ENCODE measurements at regions of chr2 and their contacts with region 1.

Region 1: DNA sequence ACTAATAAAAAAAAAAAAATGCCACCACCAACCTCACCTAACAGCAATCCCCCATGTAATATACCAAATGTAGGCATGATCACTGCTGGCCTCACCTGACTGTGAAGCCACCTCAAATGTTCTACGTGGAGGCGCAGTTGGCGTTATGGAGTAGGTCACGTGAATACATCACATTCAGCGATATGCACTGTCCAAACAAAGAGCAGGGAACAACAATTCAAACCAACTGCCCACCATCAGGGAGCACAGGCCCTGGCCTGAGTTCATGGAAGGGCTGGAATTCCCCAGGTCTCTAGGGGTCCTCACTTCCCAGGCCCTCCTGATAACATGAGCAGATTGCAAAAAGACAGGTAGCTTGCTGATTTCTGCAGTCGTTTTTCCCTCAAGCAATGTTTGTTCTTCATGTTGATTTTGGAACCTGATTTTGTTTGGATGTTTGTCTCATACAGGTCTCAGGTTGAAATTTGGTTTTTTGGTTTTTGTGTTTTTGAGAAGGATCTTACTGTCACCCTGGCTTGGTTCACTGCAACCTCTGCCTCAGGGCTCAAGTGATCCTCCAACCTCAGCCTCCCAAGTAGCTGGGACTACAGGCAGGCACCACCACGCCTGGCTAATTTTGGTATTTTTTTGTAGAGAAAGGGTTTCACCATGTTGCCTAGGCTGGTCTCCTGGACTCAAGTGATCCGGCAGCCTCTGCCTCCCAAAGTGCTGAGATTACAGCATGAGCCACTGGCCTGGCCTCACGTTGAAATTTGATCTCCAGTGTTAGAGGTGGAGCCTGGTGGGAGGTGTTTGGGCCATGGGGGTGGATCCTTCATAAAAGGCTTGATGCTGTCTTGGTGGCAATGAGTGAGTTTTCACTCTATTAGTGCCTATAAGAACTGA is 15.5 kb downstream of the TBC1D8 start:
- DNase-seq: no peak
- ATAC-seq: peak; percentile 31
- H3K4me3 ChIP-seq: no peak overlapping the region
- H3K27ac ChIP-seq: peak overlapping the region; percentile 70
- H3K4me1 ChIP-seq: peaks cover 86% of the 10 kb centered on the region
- H3K27me3 ChIP-seq: no peaks in the 10 kb centered on the region
- CTCF ChIP-seq: no peak

Region 2: DNA sequence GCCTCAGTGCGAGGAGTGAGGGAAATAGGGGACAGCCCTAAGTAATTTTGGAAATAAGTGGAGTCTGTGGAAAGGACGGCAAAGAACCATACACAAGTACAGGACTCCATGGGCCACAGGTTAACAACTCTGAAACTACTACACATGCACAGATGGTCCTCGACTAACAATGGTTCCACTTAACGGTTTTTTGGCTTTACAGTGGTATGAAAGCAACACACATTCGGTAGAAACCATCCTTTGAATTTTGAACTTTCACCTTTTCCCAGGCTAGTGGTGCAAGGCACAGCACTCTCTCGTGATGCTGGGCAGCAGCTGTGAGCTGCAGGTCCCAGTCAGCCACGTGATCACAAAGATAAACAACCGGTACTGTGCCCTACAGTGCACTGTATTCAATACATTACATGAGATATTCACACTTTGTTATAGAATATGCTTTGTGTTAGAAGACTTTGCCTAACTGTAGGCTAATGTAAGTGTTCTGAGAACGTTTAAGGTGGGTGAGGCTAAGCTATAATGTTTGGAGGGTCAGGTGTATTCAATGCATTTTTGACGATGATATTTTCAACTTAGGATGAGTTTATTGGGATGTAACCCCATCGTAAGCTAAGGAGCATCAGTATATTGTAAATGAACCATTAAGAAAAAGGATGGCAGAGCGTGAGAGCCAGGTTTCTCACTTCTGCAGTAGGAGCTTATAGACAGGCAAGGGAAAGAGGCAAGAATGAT is 29.0 kb before region 1 on chr2:
- CTCF ChIA-PET with region 1: no interaction called
- POLR2A ChIA-PET with region 1: interaction called, 11 read pairs
- in situ Hi-C with region 1: no loop called
- intact Hi-C with region 1: no loop called
- DNase-seq: no peak
- ATAC-seq: peak; percentile 66
- H3K4me3 ChIP-seq: peak overlapping the region in 1 of 2 experiments; percentile 19; a peak in 2 of 4 replicates
- H3K27ac ChIP-seq: peak overlapping the region; percentile 100
- H3K4me1 ChIP-seq: peaks cover 78% of the 10 kb centered on the region
- H3K27me3 ChIP-seq: no peaks in the 10 kb centered on the region
- CTCF ChIP-seq: no peak

Region 3: DNA sequence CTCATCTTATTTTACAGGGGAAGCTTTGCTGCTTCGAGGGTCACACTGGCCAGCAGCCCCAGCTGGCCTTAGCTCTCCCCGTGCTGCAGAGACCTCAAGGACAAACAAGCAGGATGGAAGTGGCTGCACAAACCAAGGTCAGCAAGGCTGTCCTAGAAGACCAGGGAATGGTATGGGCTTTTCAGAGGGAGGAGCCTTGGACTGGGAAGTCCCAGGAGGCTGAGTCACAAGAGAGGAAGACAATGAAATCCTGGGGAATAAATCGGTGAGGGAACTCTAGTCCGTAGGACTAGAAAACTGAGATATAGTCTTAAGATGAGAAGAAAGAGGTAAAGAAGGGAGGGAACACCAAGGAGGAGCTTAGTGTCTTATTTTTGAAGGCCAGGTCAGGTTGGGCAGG is 236.0 kb after region 1 on chr2:
- CTCF ChIA-PET with region 1: no interaction called
- POLR2A ChIA-PET with region 1: no interaction called
- in situ Hi-C with region 1: no loop called
- intact Hi-C with region 1: no loop called
- DNase-seq: no peak
- ATAC-seq: no peak
- H3K4me3 ChIP-seq: no peak overlapping the region
- H3K27ac ChIP-seq: no peak overlapping the region
- H3K4me1 ChIP-seq: no peaks in the 10 kb centered on the region
- H3K27me3 ChIP-seq: peaks cover 2% of the 10 kb centered on the region; the same call in 1 of the 2 replicates
- CTCF ChIP-seq: no peak